Right ventricle myocardium inferior (tissue), 1 donor: ENCODE measurements at regions of chr12 and their contacts with region 1.

Region 1: GRCh38 chr12:76031537-76032073 is at the start of gene PHLDA1:
- DNase-seq: peak; percentile 96
- ATAC-seq: peak; percentile 96
- total RNA-seq, gene PHLDA1: 4.0 TPM

Region 2: GRCh38 chr12:75553398-75553797 is 478.2 kb before region 1 on chr12:
- intact Hi-C with region 1: loop called (anchors 10 kb)
- DNase-seq: no peak
- ATAC-seq: peak; percentile 86

Region 3: GRCh38 chr12:75722714-75723200 is 308.8 kb before region 1 on chr12:
- intact Hi-C with region 1: loop called (anchors 5 kb)
- DNase-seq: no peak
- ATAC-seq: peak; percentile 78

Region 4: DNA sequence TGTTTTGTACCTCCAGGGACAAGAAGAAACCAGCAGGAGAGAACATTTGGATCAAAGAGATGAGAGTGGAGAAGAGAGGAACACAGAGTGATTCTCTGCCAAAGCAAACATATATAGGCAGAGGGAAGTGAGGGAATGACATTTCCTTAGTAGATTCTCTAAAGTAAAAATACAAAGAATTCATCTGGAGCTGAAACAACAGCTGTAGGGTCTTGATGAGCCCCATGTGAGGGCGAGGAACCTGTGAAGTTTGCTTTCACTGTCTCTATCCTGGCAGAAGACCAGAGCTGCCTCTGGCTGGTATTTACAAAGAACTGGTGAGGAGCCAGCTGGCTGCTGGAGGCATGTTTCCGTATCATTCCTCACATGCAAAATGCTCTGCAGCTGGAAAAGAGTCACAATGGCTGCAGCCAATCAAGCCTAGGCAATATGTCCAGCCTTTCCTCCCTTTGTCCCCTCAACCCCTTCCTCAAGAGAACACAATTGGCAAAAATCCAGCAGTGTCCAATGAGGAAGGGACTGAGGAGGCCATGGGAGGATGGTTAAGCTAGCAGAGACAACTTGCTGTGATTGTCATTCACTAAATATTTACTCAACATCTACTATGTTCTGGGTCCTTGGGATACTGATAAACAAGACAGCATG is 122.5 kb before region 1 on chr12:
- intact Hi-C with region 1: loop called (anchors 2 kb)
- DNase-seq: peak; percentile 79
- ATAC-seq: peak; percentile 79